AG04449 (cell line): ENCODE measurements at regions of chr1 and their contacts with region 1.

Region 1: DNA sequence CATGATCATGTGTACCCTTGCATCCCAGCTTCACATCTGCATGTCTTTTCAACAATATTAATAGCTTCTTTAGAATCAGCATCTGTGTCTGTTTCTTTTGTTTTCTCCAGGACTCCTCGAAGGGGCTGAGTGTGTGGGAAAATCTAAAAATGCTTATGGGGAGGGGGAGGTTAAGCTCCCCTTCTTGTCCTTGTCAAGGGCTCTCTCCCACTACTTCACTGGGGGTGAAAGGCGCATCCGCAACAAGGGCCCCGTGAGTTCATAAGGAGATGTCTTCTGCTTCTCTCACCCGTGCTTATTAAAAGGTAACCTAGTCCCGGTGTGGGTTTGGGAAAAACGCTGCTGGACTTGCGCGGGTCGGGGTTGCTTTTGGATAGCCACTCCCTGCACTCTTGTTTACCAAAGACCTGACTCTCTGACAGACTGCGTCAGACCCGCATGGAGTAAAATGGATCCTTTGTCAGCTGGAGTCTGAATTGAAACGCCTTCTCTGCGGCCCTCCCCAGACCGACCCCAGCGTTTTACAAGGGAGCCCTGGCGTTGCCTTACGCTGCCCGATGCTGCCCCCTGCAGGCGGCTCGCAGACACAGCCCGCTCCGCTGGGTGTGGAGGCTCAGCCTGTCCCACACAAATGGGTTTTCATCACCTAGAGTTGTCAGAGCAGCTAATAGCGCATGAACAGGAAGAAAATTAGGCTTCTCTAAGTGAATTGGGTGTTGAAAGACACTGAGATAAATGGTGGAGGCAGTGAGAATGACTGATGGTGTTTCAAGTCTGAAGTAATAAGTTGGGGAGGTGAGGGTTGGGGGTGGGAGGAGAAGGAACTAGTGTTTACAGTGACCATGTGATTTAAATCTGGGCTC is 53.8 kb downstream of the IER5 start:
- DNase-seq: peak; percentile 36
- H3K4me3 ChIP-seq: peak overlapping the region; percentile 43
- CTCF ChIP-seq: peak; percentile 98

Region 2: GRCh38 chr1:180623579-180624347 is 518.6 kb before region 1 on chr1:
- CTCF ChIA-PET with region 1: no interaction called
- POLR2A ChIA-PET with region 1: no interaction called
- DNase-seq: no peak
- H3K4me3 ChIP-seq: no peak overlapping the region
- CTCF ChIP-seq: peak; percentile 38

Region 3: DNA sequence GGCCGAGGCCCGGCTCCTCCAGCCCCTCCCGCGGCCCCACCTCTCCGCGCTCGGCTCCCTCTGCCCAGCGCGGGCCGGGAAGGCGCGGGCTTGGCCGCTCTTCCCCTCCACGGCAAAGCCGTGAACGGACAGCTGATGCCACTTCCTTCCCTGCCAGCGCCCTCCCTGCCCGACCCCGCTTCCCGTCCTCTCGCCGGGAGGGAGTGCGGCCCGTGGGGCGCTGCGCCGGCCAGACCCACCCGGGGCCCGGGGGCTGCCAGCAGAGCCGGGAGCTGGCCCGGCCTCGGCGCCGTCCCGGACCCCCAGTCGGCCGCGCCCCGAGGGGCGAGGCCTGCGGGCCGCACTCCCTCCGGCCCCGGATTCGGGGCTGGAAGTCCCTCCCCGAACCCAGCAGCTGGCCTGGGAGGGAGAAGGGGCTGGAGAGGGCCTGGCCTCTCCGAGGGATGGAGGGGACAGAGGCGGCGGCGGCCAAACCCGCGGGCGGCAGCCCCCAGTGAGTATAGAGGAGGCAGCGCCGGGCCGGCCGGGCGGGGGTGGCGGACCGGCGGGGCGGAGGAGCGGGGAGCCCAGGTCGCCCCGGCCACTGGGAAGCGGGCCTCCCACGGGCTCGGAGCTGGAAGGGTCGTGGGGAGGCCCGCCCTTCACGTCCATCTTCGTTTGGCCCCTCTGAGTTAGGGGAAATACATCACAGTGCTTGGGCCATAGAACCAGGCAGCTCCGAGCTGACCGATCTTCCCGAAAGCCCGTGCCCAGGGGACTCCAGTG is 229.3 kb before region 1 on chr1 and contains the start of gene KIAA1614:
- CTCF ChIA-PET with region 1: interaction called, 22 read pairs
- POLR2A ChIA-PET with region 1: interaction called, 3 read pairs
- DNase-seq: no peak
- H3K4me3 ChIP-seq: peak within 1 kb of the TSS; percentile 64
- CTCF ChIP-seq: no peak

Region 4: GRCh38 chr1:181010789-181011188 is 131.5 kb before region 1 on chr1:
- CTCF ChIA-PET with region 1: interaction called, 23 read pairs
- POLR2A ChIA-PET with region 1: no interaction called
- DNase-seq: no peak
- H3K4me3 ChIP-seq: no peak overlapping the region
- CTCF ChIP-seq: no peak

Region 5: GRCh38 chr1:181062836-181063428 is 79.4 kb before region 1 on chr1:
- CTCF ChIA-PET with region 1: interaction called, 15 read pairs
- POLR2A ChIA-PET with region 1: no interaction called
- DNase-seq: peak; percentile 41
- H3K4me3 ChIP-seq: no peak overlapping the region
- CTCF ChIP-seq: no peak

Region 6: GRCh38 chr1:181112071-181112929 is 30.0 kb before region 1 on chr1:
- CTCF ChIA-PET with region 1: interaction called, 24 read pairs
- POLR2A ChIA-PET with region 1: interaction called, 3 read pairs
- DNase-seq: peak; percentile 89
- H3K4me3 ChIP-seq: no peak overlapping the region
- CTCF ChIP-seq: no peak

Region 7: GRCh38 chr1:181166377-181167196 is 24.3 kb after region 1 on chr1:
- CTCF ChIA-PET with region 1: interaction called, 30 read pairs
- POLR2A ChIA-PET with region 1: no interaction called
- DNase-seq: peak; percentile 12
- H3K4me3 ChIP-seq: no peak overlapping the region
- CTCF ChIP-seq: peak; percentile 78